B cell (primary cell): ENCODE measurements at regions of chr14 and their contacts with region 1.

Region 1: DNA sequence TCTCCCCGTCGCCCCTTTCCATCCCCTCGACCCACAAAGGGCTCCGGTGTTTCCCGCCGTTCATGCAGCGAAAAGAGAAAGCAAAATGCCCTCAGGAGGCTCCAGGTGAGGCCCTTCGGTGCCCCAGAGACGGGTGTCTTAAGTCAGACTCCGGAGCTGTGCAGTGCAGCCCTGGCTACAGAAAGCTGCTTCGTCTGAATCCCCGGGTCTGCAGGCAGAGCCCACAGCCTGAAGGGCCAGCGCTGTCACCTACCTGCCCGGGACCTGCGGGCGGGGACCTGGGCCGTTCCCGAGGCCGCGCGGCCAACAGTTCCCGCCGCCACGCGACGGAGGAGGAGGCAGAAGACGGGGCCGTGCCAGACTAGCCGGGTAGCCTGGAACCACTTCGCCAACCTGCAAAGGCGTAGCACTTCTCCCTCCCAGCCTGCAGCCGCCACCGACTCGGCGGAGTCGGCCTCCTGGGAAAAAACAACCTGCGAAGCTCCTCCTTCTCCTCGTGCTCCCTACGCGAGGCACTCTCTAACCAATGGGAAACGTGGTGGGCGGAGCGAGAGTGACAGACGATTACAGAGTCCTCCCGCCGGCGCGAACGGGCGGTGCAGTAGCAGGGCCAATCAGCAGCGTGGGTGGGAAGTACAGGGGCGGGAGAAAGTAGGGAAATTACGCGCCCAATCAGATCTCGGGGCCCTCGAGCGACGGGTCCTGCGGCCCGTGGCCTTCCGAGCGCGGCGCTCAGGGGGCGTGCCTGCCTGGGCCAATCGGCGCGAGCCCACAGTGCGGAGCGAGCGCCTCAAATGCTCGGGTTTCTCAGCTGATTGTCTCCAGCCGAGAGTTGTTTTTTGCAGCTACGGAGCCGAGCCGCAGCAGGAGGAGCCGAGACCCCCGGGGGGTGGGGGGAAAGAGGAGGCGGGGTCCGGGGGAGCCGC is at the starts of genes GPR137C and TXNDC16:
- DNase-seq: peak; percentile 100
- ATAC-seq: peak; percentile 87
- H3K4me3 ChIP-seq: peak within 1 kb of the TSS; percentile 52 to 88 (median 82)
- H3K4me3 Mint-ChIP-seq: peak within 1 kb of the TSS; percentile 97
- H3K27ac ChIP-seq: peak within 1 kb of the TSS; percentile 77 to 89
- H3K27ac Mint-ChIP-seq: peak within 1 kb of the TSS; percentile 88
- H3K4me1 ChIP-seq: peaks cover 16 to 24% of the 10 kb centered on the region in 2 donors
- H3K4me1 Mint-ChIP-seq: peaks cover 20% of the 10 kb centered on the region
- H3K27me3 ChIP-seq: peaks cover 0 to 13% (median 13%) of the 10 kb centered on the region in 4 experiments
- H3K27me3 Mint-ChIP-seq: peaks cover 10% of the 10 kb centered on the region
- CTCF ChIP-seq: peak; percentile 6
- total RNA-seq, gene GPR137C: 0.67 and 0.95 TPM in 2 replicates
- total RNA-seq, gene TXNDC16: 5.2 and 7.0 TPM in 2 replicates

Region 2: GRCh38 chr14:51846631-51847488 is 705.5 kb before region 1 on chr14:
- CTCF ChIA-PET with region 1: no interaction called
- POLR2A ChIA-PET with region 1: no interaction called
- intact Hi-C with region 1: loop called (anchors 10 kb)
- DNase-seq: peak; percentile 96
- ATAC-seq: peak; percentile 79
- H3K4me3 ChIP-seq: peak overlapping the region; percentile 57 to 89 (median 72)
- H3K4me3 Mint-ChIP-seq: peak overlapping the region; percentile 86
- H3K27ac ChIP-seq: peak overlapping the region; percentile 98
- H3K27ac Mint-ChIP-seq: peak overlapping the region; percentile 97
- H3K4me1 ChIP-seq: peaks cover 50 to 63% of the 10 kb centered on the region in 2 donors
- H3K4me1 Mint-ChIP-seq: peaks cover 75% of the 10 kb centered on the region
- H3K27me3 ChIP-seq: no peaks in the 10 kb centered on the region
- H3K27me3 Mint-ChIP-seq: no peaks in the 10 kb centered on the region
- CTCF ChIP-seq: no peak

Region 3: GRCh38 chr14:52313903-52314594 is 238.3 kb before region 1 on chr14 and contains the start of gene PTGER2:
- CTCF ChIA-PET with region 1: no interaction called
- POLR2A ChIA-PET with region 1: no interaction called
- intact Hi-C with region 1: loop called (anchors 5 kb)
- DNase-seq: peak; percentile 58
- ATAC-seq: peak; percentile 56
- H3K4me3 ChIP-seq: peak within 1 kb of the TSS; percentile 37 to 54 (median 50)
- H3K4me3 Mint-ChIP-seq: peak within 1 kb of the TSS; percentile 95
- H3K27ac ChIP-seq: no peak within 1 kb of the TSS
- H3K27ac Mint-ChIP-seq: peak within 1 kb of the TSS; percentile 3
- H3K4me1 ChIP-seq: peaks cover 49 to 57% of the 10 kb centered on the region in 2 donors
- H3K4me1 Mint-ChIP-seq: peaks cover 49% of the 10 kb centered on the region
- H3K27me3 ChIP-seq: peaks cover 0 to 77% (median 52%) of the 10 kb centered on the region in 4 experiments
- H3K27me3 Mint-ChIP-seq: peaks cover 57% of the 10 kb centered on the region
- CTCF ChIP-seq: no peak
- total RNA-seq, gene PTGER2: 0.32 and 0.44 TPM in 2 replicates

Region 4: DNA sequence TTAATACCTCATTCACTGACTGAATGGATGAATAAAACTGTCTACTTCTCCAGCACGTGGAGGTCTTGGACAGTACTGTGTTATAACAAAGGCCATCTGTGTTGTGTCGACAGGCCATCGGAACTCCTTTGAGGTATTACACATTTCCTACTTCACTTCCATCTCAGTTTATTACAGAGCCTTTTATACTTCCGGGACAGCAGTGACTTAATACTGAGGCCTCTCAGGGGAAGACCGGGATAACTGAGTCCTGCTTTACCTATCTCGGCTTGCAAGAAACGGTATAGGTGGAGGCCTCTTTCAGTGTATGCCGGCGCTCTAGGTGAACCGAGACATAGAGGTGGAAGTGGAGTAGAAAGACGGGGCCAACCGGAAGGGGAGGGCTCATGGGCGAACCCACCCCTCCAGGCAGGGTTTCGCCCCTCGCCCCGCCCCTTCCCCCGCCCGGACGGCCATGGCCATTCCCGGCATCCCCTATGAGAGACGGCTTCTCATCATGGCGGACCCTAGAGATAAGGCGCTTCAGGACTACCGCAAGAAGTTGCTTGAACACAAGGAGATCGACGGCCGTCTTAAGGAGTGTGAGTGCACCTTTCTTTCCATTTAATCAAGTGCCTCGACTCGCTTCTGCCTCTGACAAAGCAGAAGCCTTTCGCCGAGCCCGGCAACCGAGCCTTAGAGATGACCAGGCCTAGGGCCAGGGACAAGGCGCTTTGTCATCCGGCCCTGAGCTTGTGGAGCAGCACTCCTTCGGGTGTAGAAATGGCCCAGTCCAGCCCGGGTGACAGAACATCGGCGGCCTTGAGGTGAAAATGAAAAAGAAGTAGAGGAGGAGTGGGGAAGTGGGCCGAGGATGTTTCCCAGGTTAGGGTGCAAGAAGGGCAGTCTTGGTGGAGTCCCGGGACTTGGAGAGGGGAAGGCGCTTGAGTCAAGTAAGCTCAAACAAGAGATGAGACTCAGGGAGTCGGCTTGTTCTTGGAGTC is 154.7 kb after region 1 on chr14 and contains the start of gene PSMC6:
- CTCF ChIA-PET with region 1: no interaction called
- POLR2A ChIA-PET with region 1: no interaction called
- intact Hi-C with region 1: loop called (anchors 1 kb)
- DNase-seq: peak; percentile 94
- ATAC-seq: peak; percentile 99
- H3K4me3 ChIP-seq: peak within 1 kb of the TSS; percentile 83 to 94 (median 88)
- H3K4me3 Mint-ChIP-seq: peak within 1 kb of the TSS; percentile 98
- H3K27ac ChIP-seq: peak within 1 kb of the TSS; percentile 67 to 90
- H3K27ac Mint-ChIP-seq: peak within 1 kb of the TSS; percentile 98
- H3K4me1 ChIP-seq: peaks cover 16% of the 10 kb centered on the region in 2 donors
- H3K4me1 Mint-ChIP-seq: peaks cover 24% of the 10 kb centered on the region
- H3K27me3 ChIP-seq: no peaks in the 10 kb centered on the region
- H3K27me3 Mint-ChIP-seq: no peaks in the 10 kb centered on the region
- CTCF ChIP-seq: no peak
- total RNA-seq, gene PSMC6: 75.3 and 92.2 TPM in 2 replicates

Region 5: GRCh38 chr14:52724360-52724644 is 172.0 kb after region 1 on chr14:
- CTCF ChIA-PET with region 1: no interaction called
- POLR2A ChIA-PET with region 1: no interaction called
- intact Hi-C with region 1: no loop called
- DNase-seq: peak; percentile 23
- ATAC-seq: peak; percentile 57
- H3K4me3 ChIP-seq: peak overlapping the region in 4 of 5 experiments; percentile 42 to 66 (median 50)
- H3K4me3 Mint-ChIP-seq: peak overlapping the region; percentile 59
- H3K27ac ChIP-seq: peak overlapping the region; percentile 20 to 80
- H3K27ac Mint-ChIP-seq: peak overlapping the region; percentile 61
- H3K4me1 ChIP-seq: peaks cover 31 to 46% of the 10 kb centered on the region in 2 donors
- H3K4me1 Mint-ChIP-seq: peaks cover 52% of the 10 kb centered on the region
- H3K27me3 ChIP-seq: no peaks in the 10 kb centered on the region
- H3K27me3 Mint-ChIP-seq: no peaks in the 10 kb centered on the region
- CTCF ChIP-seq: peak; percentile 13

Region 6: DNA sequence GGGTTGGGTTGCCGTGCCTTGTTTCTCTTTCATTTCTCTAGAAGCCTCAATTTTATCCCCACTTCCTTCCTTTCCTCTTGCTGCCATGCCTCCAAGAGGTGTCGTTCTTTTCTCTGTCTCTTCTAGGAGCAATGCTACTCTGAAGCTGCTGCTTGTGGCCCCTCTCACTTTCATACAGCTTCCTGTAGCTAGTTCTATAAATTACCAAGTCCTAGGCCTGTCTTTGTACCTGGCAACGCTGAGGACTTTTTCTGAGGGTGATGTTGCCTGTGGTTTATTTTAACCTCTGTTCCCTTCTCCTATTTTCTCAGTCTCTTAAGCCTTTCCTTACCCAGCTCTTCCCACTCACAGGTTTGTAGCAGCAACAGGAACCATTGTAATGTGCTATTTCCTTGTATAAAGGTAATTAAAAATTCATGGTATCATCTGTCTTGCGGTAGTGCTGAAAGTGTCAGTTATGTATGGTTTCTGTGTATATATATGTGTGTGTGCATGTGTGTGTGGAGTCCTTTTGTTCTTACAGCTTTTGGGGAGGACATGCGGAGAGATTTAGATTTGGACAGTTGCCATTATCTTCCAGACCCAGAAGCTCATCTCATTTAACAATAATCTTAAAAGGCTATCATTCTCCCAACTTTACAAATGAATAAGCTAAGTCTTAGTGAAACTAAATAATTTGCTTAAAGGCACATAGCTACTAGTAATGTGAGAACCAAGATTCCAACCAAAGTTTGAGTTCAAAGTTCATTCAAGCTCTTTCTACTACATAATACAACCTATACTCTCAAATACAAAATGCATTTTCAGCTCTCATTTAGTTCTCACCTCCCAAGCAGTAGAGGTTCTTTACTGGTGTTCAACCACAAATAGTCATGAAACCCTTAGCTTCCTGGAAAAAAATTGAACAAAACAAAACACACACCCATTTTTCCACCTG is 557.0 kb after region 1 on chr14:
- CTCF ChIA-PET with region 1: no interaction called
- POLR2A ChIA-PET with region 1: interaction called, 3 read pairs
- intact Hi-C with region 1: loop called (anchors 5 kb)
- DNase-seq: peak; percentile 76
- ATAC-seq: peak; percentile 31
- H3K4me3 ChIP-seq: peak overlapping the region; percentile 28 to 69 (median 61)
- H3K4me3 Mint-ChIP-seq: no peak overlapping the region
- H3K27ac ChIP-seq: peak overlapping the region; percentile 80 to 81
- H3K27ac Mint-ChIP-seq: no peak overlapping the region
- H3K4me1 ChIP-seq: peaks cover 15 to 26% of the 10 kb centered on the region in 2 donors
- H3K4me1 Mint-ChIP-seq: peaks cover 2% of the 10 kb centered on the region
- H3K27me3 ChIP-seq: no peaks in the 10 kb centered on the region
- H3K27me3 Mint-ChIP-seq: no peaks in the 10 kb centered on the region
- CTCF ChIP-seq: no peak